GM12878 (cell line): ENCODE measurements at regions of chr6 and their contacts with region 1.

Region 1: DNA sequence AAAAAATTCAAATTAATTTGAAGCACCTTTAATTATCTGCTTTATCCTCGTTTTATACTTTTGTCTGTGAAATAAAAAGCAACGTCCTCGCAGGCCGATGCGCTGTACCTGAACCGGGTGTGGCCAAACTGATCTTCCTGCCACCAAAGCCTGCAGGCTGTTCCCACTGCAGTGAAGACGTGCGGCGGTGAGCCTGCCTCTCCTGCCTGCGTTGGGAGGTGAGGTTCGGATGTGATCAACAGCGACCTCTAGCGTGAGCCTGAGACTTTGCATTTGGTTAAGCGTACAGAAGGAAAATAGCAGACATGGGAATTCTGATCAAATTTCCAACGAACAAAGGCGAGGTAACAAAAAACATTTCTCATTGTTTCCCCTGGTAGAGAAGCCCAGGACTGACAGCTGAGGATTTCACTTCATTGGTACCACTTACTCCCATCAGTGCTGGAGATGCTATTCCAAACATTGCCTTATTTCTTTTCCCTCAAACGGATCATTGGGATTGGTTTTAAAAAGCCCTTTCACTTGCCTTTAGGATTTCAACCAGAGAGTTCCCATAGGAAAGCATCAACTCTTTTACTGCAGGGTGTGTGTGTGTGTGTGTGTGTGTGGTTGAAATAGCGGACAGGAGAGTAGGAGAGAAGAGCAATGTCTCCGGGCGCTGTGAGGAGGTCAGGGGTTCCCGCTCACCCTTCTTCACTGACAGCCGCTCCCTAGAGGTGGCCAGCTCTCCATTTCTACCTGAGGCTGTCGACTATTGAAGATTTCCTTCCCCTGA is 56.6 kb upstream of the CCN6 start:
- DNase-seq: no peak
- ATAC-seq: peak; percentile 85
- H3K4me3 ChIP-seq: no peak overlapping the region
- H3K27ac ChIP-seq: no peak overlapping the region
- H3K4me1 ChIP-seq: peaks cover 28% of the 10 kb centered on the region
- H3K27me3 ChIP-seq: no peaks in the 10 kb centered on the region
- CTCF ChIP-seq: peak; percentile 85 to 95 (median 93); a peak in 5 of 6 replicates
- EP300 ChIP-seq: no peak
- POLR2A ChIP-seq: no peak
- RAD21 ChIP-seq: peak; percentile 99

Region 2: GRCh38 chr6:111743862-111744692 is 253.2 kb before region 1 on chr6:
- CTCF ChIA-PET with region 1: interaction called, 3 read pairs
- POLR2A ChIA-PET with region 1: no interaction called
- RAD21 ChIA-PET with region 1: interaction called, 3 read pairs
- SMC1A ChIA-PET with region 1: interaction called, 10 read pairs
- in situ Hi-C with region 1: no loop called
- intact Hi-C with region 1: no loop called
- DNase-seq: no peak
- ATAC-seq: no peak
- H3K4me3 ChIP-seq: no peak overlapping the region
- H3K27ac ChIP-seq: no peak overlapping the region
- H3K4me1 ChIP-seq: peaks cover 58% of the 10 kb centered on the region
- H3K27me3 ChIP-seq: no peaks in the 10 kb centered on the region
- CTCF ChIP-seq: no peak
- EP300 ChIP-seq: no peak
- POLR2A ChIP-seq: no peak
- RAD21 ChIP-seq: no peak

Region 3: GRCh38 chr6:111873178-111874024 is 123.9 kb before region 1 on chr6 and contains the start of gene FYN:
- CTCF ChIA-PET with region 1: interaction called, 5 read pairs
- POLR2A ChIA-PET with region 1: no interaction called
- RAD21 ChIA-PET with region 1: interaction called, 3 read pairs
- SMC1A ChIA-PET with region 1: interaction called, 8 read pairs
- in situ Hi-C with region 1: no loop called
- intact Hi-C with region 1: loop called (anchors 1 kb)
- DNase-seq: peak; percentile 76
- ATAC-seq: peak; percentile 92
- H3K4me3 ChIP-seq: peak within 1 kb of the TSS; percentile 98
- H3K27ac ChIP-seq: peak within 1 kb of the TSS; percentile 76
- H3K4me1 ChIP-seq: peaks cover 5% of the 10 kb centered on the region
- H3K27me3 ChIP-seq: no peaks in the 10 kb centered on the region
- CTCF ChIP-seq: peak; percentile 28 to 65 (median 30); a peak in 5 of 6 replicates
- EP300 ChIP-seq: no peak
- POLR2A ChIP-seq: peak; percentile 95
- RAD21 ChIP-seq: peak; percentile 48
- polyA plus RNA-seq, gene FYN: 51.4 to 55.1 TPM

Region 4: DNA sequence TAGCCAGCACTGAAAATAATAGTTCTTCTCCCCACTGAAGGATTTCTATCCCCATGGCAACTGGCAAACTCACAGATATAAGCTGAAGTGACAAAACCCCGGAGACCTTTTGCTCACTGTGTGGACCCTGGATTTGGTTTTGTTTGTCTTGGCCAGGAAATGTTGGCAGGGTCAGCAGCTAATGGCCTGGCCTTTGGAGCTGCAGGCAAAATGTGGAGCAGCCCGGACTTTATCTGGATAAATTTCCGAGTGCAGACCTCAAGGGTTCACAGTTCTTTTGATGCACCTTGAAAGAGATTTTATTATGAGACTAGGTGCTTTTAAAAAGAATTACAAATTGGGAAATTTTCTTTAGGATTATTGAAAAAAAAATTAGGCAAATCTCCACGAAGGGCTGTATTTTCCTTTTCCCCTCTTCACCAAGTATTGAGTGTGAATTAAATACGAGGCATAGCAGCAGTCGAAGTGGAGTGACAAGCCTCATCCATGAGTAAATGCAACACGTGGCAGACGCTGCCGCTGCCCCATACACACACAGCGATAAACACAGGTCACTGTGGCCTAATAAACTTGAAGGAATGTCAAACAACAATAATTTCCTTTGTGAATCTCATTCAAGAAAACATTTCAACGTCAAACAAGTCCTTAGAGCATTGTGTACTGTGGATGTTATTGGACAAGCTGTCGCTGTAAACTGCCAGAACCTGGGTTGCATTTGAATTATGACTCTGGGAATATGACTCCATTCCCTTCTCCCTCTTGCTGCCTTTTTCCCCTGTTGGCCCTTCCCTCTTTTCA is 21.6 kb after region 1 on chr6:
- CTCF ChIA-PET with region 1: interaction called, 3 read pairs
- POLR2A ChIA-PET with region 1: no interaction called
- RAD21 ChIA-PET with region 1: no interaction called
- SMC1A ChIA-PET with region 1: interaction called, 10 read pairs
- in situ Hi-C with region 1: no loop called
- intact Hi-C with region 1: no loop called
- DNase-seq: no peak
- ATAC-seq: no peak
- H3K4me3 ChIP-seq: no peak overlapping the region
- H3K27ac ChIP-seq: no peak overlapping the region
- H3K4me1 ChIP-seq: peaks cover 16% of the 10 kb centered on the region; the same call in 1 of the 2 replicates
- H3K27me3 ChIP-seq: no peaks in the 10 kb centered on the region
- CTCF ChIP-seq: no peak
- EP300 ChIP-seq: no peak
- POLR2A ChIP-seq: no peak
- RAD21 ChIP-seq: no peak

Region 5: DNA sequence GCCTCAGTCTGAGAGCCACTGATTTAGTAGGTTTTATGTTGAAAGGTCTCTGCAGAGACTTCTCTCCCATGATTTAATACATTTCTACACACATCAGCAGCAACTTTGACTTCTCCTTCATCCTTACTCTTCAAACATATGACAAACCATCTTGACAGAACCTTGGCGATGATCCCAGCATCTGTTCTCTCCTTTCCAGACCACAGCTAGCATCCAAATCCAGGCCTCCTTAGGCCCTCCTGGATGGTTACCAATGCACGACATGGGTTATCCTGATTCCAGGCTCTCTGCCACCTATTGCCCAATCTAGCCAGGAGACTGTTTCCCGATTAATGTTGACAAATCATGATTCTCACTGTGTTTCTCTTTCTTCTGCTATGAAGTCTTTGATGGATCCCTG is 240.3 kb after region 1 on chr6:
- CTCF ChIA-PET with region 1: no interaction called
- POLR2A ChIA-PET with region 1: no interaction called
- RAD21 ChIA-PET with region 1: no interaction called
- SMC1A ChIA-PET with region 1: no interaction called
- in situ Hi-C with region 1: no loop called
- intact Hi-C with region 1: no loop called
- DNase-seq: no peak
- ATAC-seq: no peak
- H3K4me3 ChIP-seq: no peak overlapping the region
- H3K27ac ChIP-seq: no peak overlapping the region
- H3K4me1 ChIP-seq: no peaks in the 10 kb centered on the region
- H3K27me3 ChIP-seq: peaks cover 0 to 2% of the 10 kb centered on the region in 2 experiments; a peak in 2 of 4 replicates
- CTCF ChIP-seq: no peak
- EP300 ChIP-seq: no peak
- POLR2A ChIP-seq: no peak
- RAD21 ChIP-seq: no peak